WTC11 (cell line): ENCODE measurements at regions of chr1 and their contacts with region 1.

Region 1: DNA sequence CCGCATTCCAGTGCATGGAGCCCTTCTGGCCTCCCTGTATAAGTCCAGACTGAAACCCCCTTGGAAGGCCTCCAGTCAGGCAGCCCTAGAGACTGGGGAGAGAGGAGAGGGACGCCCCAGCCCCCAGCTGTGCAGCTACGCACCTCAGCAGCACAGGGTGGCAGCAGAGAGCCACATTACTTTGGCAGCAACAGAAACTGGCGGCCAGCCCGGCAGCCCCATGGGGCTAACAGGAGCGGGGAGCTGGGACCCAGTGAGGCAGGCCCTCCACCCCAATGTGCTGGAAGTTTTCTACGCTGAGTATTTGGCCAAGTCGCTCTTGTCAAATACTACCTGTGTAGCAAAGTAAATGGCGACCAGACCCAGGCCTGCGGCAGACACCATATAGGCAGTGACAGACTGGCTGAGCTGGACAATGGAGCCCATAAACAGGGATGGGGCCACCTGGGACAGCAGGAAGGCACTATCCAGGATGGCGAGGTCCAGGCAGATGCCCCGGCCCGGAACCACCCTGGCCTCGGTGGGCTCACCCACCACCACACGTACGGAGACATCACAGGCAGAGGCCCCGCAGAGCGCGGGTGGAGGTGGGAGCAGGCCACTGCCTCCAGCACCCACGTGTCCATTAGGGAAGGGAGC is 21.2 kb downstream of the SLC45A3 start:
- DNase-seq: peak; percentile 91
- ATAC-seq: peak; percentile 84
- H3K4me3 Mint-ChIP-seq: no peak overlapping the region
- H3K27ac Mint-ChIP-seq: peak overlapping the region; percentile 88; the same call in 1 of the 2 replicates
- H3K4me1 Mint-ChIP-seq: peaks cover 35% of the 10 kb centered on the region
- H3K27me3 Mint-ChIP-seq: no peaks in the 10 kb centered on the region
- CTCF ChIP-seq: peak; percentile 83

Region 2: DNA sequence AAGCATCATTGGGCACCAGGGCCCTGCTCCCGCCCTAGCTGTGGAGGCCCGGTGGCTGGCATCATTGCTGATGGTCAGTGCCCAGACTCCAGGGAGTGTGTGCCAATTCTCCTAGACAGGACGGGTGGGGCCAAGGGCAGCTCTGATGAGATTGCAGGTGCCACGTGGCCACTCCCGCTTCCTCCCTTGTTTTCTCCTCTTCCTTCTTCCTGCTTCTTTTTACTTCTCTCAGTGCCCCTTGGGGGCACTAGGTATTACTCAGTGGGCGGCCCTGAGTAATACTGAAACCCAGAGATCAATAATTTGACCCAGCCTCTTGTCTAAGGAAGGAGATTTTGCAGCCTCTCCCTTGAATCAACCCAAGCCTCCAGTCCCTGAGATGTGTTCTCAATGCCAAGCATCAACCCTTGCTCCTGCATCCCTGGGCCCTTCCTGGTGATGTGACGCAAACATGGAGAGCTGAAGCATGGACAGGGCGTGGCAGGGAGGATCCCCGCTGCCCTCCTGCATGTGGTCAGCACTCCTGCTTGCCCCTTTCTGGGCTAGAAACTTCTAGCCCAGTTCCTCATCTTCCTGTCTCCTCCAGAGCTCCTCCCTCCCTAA is 122.2 kb before region 1 on chr1:
- CTCF ChIA-PET with region 1: no interaction called
- POLR2A ChIA-PET with region 1: no interaction called
- DNase-seq: no peak
- ATAC-seq: no peak
- H3K4me3 Mint-ChIP-seq: no peak overlapping the region
- H3K27ac Mint-ChIP-seq: no peak overlapping the region
- H3K4me1 Mint-ChIP-seq: peaks cover 4% of the 10 kb centered on the region; the same call in 1 of the 2 replicates
- H3K27me3 Mint-ChIP-seq: peaks cover 66% of the 10 kb centered on the region
- CTCF ChIP-seq: no peak

Region 3: GRCh38 chr1:205568469-205569361 is 90.3 kb before region 1 on chr1:
- CTCF ChIA-PET with region 1: interaction called, 22 read pairs
- POLR2A ChIA-PET with region 1: no interaction called
- DNase-seq: no peak
- ATAC-seq: peak; percentile 19
- H3K4me3 Mint-ChIP-seq: peak overlapping the region; percentile 68
- H3K27ac Mint-ChIP-seq: no peak overlapping the region
- H3K4me1 Mint-ChIP-seq: peaks cover 12% of the 10 kb centered on the region
- H3K27me3 Mint-ChIP-seq: peaks cover 77% of the 10 kb centered on the region
- CTCF ChIP-seq: no peak

Region 4: DNA sequence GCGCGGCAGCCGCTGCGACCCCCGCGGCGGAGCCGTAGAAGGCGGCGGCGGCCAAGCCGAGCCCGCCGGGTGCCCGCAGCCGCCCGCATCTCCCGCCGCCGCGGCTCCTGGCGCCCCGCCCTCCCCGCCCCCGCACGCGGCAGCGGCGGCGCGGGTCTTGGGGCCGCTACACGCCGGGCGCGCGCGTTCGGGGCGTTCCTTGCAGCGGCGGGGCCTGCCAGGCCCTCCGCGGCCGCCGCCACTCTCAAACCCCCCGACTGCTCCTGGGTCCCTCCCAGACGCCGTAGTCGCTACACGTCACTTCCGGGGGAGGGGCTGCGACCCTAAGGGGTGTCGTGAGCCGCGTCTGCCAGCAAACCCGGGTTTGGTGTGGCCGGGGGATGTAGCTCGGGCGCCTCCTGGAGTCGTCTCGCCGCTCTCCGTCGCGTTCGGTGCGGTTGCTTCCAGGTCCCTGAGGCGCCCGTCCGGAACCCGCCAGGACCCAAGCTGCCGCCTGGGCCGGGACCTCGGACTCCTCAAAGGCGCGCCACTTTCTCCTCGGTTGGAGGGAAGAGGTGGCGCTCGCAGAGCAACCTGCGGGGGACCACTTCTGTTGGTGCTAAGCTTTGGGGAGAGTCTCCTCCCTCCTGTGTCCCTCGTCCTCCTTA is 27.2 kb before region 1 on chr1 and contains the start of gene ELK4:
- CTCF ChIA-PET with region 1: interaction called, 47 read pairs
- POLR2A ChIA-PET with region 1: interaction called, 4 read pairs
- DNase-seq: peak; percentile 99
- ATAC-seq: peak; percentile 89
- H3K4me3 Mint-ChIP-seq: peak within 1 kb of the TSS; percentile 96
- H3K27ac Mint-ChIP-seq: peak within 1 kb of the TSS; percentile 100
- H3K4me1 Mint-ChIP-seq: peaks cover 27% of the 10 kb centered on the region
- H3K27me3 Mint-ChIP-seq: no peaks in the 10 kb centered on the region
- CTCF ChIP-seq: no peak
- total RNA-seq, gene ELK4: 34.4 to 39.0 TPM (median 37.5 TPM) in 3 replicates

Region 5: GRCh38 chr1:205680073-205680851 is 21.2 kb after region 1 on chr1 and contains the start of gene SLC45A3:
- CTCF ChIA-PET with region 1: interaction called, 307 read pairs
- POLR2A ChIA-PET with region 1: interaction called, 3 read pairs
- DNase-seq: peak; percentile 65
- ATAC-seq: peak; percentile 60
- H3K4me3 Mint-ChIP-seq: peak within 1 kb of the TSS; percentile 77
- H3K27ac Mint-ChIP-seq: no peak within 1 kb of the TSS
- H3K4me1 Mint-ChIP-seq: peaks cover 49% of the 10 kb centered on the region
- H3K27me3 Mint-ChIP-seq: peaks cover 7% of the 10 kb centered on the region
- CTCF ChIP-seq: no peak
- total RNA-seq, gene SLC45A3: 14.8 to 15.2 TPM (median 15.0 TPM) in 3 replicates

Region 6: GRCh38 chr1:205700865-205701401 is 41.9 kb after region 1 on chr1:
- CTCF ChIA-PET with region 1: interaction called, 468 read pairs
- POLR2A ChIA-PET with region 1: interaction called, 3 read pairs
- DNase-seq: peak; percentile 34
- ATAC-seq: peak; percentile 57
- H3K4me3 Mint-ChIP-seq: no peak overlapping the region
- H3K27ac Mint-ChIP-seq: no peak overlapping the region
- H3K4me1 Mint-ChIP-seq: peaks cover 17% of the 10 kb centered on the region
- H3K27me3 Mint-ChIP-seq: no peaks in the 10 kb centered on the region
- CTCF ChIP-seq: no peak

Region 7: GRCh38 chr1:205729945-205730610 is 71.0 kb after region 1 on chr1:
- CTCF ChIA-PET with region 1: interaction called, 12 read pairs
- POLR2A ChIA-PET with region 1: no interaction called
- DNase-seq: no peak
- ATAC-seq: no peak
- H3K4me3 Mint-ChIP-seq: no peak overlapping the region
- H3K27ac Mint-ChIP-seq: peak overlapping the region; percentile 59; the same call in 1 of the 2 replicates
- H3K4me1 Mint-ChIP-seq: peaks cover 3% of the 10 kb centered on the region; the same call in 1 of the 2 replicates
- H3K27me3 Mint-ChIP-seq: no peaks in the 10 kb centered on the region
- CTCF ChIP-seq: no peak